WTC11 (cell line): ENCODE measurements at regions of chr19 and their contacts with region 1.

Region 1: GRCh38 chr19:2578901-2579677 is 103.2 kb downstream of the GADD45B start:
- DNase-seq: peak; percentile 92
- ATAC-seq: peak; percentile 78
- H3K4me3 Mint-ChIP-seq: peak overlapping the region; percentile 65
- H3K27ac Mint-ChIP-seq: peak overlapping the region; percentile 92
- H3K4me1 Mint-ChIP-seq: peaks cover 14% of the 10 kb centered on the region
- H3K27me3 Mint-ChIP-seq: peaks cover 4% of the 10 kb centered on the region; the same call in 1 of the 2 replicates
- CTCF ChIP-seq: peak; percentile 54

Region 2: DNA sequence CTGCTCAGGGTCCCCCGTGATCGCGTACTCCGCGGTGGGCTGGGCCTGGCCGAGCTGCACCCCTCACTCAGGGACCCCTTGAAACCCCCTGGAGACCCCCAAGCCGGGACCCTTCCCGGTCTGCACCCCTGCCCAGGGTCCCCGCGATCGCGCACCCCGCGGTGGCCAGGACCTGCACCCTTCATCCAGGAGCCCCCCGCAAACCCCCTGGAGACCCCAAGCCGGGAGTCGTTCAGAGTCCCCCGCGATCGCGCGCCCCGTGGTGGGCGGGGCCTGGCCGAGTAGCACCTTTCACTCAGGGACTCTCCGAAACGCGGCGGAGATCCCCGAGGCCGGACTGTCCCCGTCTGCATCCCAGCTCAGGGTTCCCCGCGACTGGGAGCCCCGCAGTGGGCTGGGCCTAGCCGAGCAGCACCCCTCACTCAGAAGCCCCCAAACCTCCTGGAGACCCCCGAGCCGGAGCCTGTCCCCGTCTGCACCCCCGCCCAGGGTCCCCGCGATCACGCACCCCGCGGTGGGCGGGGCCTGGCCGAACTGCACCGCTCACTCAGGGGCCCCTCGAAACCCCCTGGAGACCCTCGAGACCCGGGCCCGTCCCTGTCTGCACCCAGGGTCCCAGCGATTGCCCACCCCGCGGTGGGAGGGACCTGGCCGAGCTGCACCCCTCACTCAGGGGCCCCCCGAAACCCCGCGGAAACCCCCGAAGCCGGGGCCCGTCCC is 123.1 kb before region 1 on chr19:
- CTCF ChIA-PET with region 1: interaction called, 11 read pairs
- POLR2A ChIA-PET with region 1: interaction called, 3 read pairs
- DNase-seq: peak; percentile 28
- ATAC-seq: no peak
- H3K4me3 Mint-ChIP-seq: peak overlapping the region; percentile 75
- H3K27ac Mint-ChIP-seq: no peak overlapping the region
- H3K4me1 Mint-ChIP-seq: peaks cover 20% of the 10 kb centered on the region
- H3K27me3 Mint-ChIP-seq: no peaks in the 10 kb centered on the region
- CTCF ChIP-seq: no peak

Region 3: DNA sequence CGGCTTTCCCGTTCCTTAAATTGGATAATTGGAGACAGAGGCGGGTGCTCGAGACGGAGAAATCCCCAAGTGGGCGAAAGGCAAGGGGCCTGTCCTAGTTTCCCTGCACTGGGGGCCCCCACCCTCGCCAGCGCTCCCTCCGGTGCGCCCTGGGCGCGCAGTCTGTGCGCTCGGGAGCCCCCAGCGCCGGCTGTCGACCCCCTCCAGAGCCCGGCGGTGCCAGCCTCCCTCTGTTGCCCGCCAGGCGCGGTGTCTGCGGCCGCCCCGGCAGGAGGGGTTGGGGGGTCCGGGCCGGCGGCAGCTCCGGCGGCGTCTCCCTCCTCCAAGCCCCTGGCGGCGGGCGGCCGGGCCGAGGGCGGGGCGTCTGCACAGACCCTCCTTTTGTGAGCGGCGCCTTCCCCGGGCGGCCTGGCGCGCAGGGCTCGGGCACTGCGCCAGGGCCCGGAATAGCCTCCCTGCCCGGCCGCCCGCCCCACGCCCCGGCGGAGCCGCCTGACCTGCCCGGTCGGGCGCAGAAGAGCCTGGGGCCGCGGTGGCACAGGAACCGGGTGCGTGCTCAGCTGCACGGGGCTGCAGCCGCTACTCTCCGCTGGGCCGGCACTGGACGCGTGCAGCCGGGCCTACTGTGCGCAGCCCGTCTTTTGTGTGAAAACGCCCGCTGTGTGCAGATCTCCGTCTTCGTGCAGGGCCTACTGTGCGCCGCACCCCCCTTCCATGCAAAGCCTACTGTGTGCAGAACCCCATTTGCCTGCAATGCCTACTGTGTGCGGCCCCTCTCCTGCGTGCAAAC is 90.0 kb before region 1 on chr19:
- CTCF ChIA-PET with region 1: interaction called, 21 read pairs
- POLR2A ChIA-PET with region 1: no interaction called
- DNase-seq: peak; percentile 66
- ATAC-seq: peak; percentile 79
- H3K4me3 Mint-ChIP-seq: peak overlapping the region; percentile 69
- H3K27ac Mint-ChIP-seq: no peak overlapping the region
- H3K4me1 Mint-ChIP-seq: peaks cover 11% of the 10 kb centered on the region; the same call in 1 of the 2 replicates
- H3K27me3 Mint-ChIP-seq: peaks cover 69% of the 10 kb centered on the region
- CTCF ChIP-seq: no peak

Region 4: GRCh38 chr19:2543463-2544442 is 35.3 kb before region 1 on chr19:
- CTCF ChIA-PET with region 1: interaction called, 58 read pairs
- POLR2A ChIA-PET with region 1: interaction called, 28 read pairs
- DNase-seq: peak; percentile 91
- ATAC-seq: peak; percentile 67
- H3K4me3 Mint-ChIP-seq: peak overlapping the region; percentile 34; the same call in 1 of the 2 replicates
- H3K27ac Mint-ChIP-seq: peak overlapping the region; percentile 97
- H3K4me1 Mint-ChIP-seq: peaks cover 41% of the 10 kb centered on the region
- H3K27me3 Mint-ChIP-seq: peaks cover 3% of the 10 kb centered on the region; the same call in 1 of the 2 replicates
- CTCF ChIP-seq: no peak

Region 5: DNA sequence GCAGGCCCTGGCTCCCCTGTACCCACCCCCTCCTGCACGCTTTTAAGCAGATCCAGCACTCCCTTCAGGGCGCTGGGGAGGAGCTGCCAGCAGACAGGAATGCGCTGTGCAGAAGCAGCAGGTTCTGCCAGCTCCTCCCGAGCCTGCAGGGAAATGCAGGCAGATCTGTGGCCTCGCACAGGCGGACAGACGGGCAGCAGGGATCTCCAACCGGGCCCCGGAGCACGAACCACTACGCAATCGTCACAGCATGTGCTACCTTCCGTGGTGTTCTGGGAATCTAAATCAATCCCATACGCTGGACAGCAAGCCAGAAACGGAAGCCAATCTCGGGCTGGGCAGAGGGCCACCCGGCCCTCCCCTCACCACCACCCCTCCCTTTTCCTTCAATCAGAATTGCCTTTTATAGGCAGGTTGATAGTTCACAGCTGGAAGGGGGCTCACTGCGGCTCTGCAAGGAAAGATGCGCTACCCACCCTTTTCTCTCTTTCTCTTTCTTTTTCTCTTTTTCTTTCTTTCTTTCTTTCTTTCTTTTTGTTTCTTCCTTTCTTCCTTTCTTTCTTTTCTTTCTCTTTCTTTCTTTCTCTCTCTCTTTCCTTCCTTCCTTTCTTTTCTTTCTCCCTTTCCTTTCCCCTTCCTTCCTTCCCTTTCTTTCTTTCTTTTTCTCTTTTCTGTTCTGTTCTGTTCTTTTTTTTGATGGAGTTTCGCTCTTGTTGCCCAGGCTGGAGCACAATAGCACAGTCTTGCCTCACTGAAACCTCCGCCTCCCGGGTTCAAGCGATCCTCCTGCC is 23.5 kb after region 1 on chr19:
- CTCF ChIA-PET with region 1: interaction called, 24 read pairs
- POLR2A ChIA-PET with region 1: interaction called, 7 read pairs
- DNase-seq: peak; percentile 72
- ATAC-seq: peak; percentile 72
- H3K4me3 Mint-ChIP-seq: peak overlapping the region; percentile 63
- H3K27ac Mint-ChIP-seq: peak overlapping the region; percentile 84
- H3K4me1 Mint-ChIP-seq: peaks cover 19% of the 10 kb centered on the region
- H3K27me3 Mint-ChIP-seq: peaks cover 20% of the 10 kb centered on the region
- CTCF ChIP-seq: no peak